Activated CD4-positive, alpha-beta memory T cell treated with anti-CD3 and anti-CD28 coated beads, Interleukin-2, amount 10 ng/mL, durations not matched to agents 7 days and 5 days (primary cell): ENCODE measurements at regions of chr11 and their contacts with region 1.

Region 1: GRCh38 chr11:107549253-107549953 is 16.1 kb downstream of the ALKBH8 start:
- DNase-seq: peak; percentile 25
- H3K4me3 Mint-ChIP-seq: no peak overlapping the region
- H3K27ac Mint-ChIP-seq: no peak overlapping the region
- H3K4me1 Mint-ChIP-seq: no peaks in the 10 kb centered on the region
- H3K27me3 Mint-ChIP-seq: no peaks in the 10 kb centered on the region

Region 2: GRCh38 chr11:107565219-107565937 is 16.0 kb after region 1 on chr11 and contains the start of gene ALKBH8:
- CTCF ChIA-PET with region 1: interaction called, 58 read pairs
- POLR2A ChIA-PET with region 1: interaction called, 3 read pairs
- DNase-seq: peak; percentile 84
- H3K4me3 Mint-ChIP-seq: peak within 1 kb of the TSS; percentile 92
- H3K27ac Mint-ChIP-seq: peak within 1 kb of the TSS; percentile 91
- H3K4me1 Mint-ChIP-seq: peaks cover 53% of the 10 kb centered on the region
- H3K27me3 Mint-ChIP-seq: no peaks in the 10 kb centered on the region
- total RNA-seq, gene ALKBH8: 7.7 to 8.4 TPM